Panc1 (cell line): ENCODE measurements at regions of chr12 and their contacts with region 1.

Region 1: GRCh38 chr12:2284857-2285256 is 232.1 kb downstream of the CACNA1C start:
- DNase-seq: peak; percentile 8
- ATAC-seq: peak; percentile 95
- H3K4me3 ChIP-seq: no peak overlapping the region
- H3K27ac ChIP-seq: no peak overlapping the region
- H3K4me1 ChIP-seq: no peaks in the 10 kb centered on the region
- H3K27me3 ChIP-seq: peaks cover 4% of the 10 kb centered on the region; the same call in 1 of the 2 replicates
- CTCF ChIP-seq: peak; percentile 73

Region 2: DNA sequence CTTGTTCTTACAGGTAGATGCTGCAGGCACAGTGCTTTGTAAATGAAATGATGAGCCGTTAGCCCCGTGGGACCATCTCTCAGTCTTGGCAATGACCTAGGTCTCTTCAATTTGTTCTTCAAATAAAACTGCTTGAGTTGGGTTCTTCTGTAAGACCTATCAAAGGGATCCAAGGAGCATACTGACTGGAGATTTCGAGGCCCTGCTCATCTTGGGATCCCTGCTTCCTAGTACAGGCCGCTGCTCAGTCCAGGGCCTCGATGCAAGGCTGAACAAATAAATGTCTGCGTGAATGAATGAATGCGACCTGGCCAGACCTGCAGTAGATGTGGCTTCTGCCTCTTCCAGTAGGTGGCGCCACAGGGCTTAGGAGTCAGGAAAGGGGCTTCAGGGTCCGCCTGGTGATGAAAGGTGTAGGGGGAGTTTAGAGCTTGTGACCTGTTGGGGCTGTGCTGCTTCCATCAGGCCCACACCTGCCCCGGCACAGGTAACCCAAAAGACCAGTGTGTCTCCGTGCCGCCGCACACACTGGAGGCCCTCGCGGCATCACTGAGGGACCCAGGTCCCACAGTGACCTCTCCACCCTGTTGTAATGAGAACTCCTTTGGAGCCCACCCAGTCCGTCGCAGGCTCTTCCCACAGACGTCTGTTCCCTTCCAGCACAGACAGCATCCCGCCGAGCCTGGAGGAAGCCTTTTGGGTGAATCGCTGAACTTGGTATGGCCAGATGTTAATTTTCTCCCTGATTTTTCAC is 227.6 kb before region 1 on chr12:
- CTCF ChIA-PET with region 1: no interaction called
- POLR2A ChIA-PET with region 1: no interaction called
- in situ Hi-C with region 1: no loop called
- intact Hi-C with region 1: loop called (anchors 5 kb)
- DNase-seq: peak; percentile 7
- ATAC-seq: no peak
- H3K4me3 ChIP-seq: no peak overlapping the region
- H3K27ac ChIP-seq: no peak overlapping the region
- H3K4me1 ChIP-seq: no peaks in the 10 kb centered on the region
- H3K27me3 ChIP-seq: peaks cover 15% of the 10 kb centered on the region
- CTCF ChIP-seq: peak; percentile 81

Region 3: DNA sequence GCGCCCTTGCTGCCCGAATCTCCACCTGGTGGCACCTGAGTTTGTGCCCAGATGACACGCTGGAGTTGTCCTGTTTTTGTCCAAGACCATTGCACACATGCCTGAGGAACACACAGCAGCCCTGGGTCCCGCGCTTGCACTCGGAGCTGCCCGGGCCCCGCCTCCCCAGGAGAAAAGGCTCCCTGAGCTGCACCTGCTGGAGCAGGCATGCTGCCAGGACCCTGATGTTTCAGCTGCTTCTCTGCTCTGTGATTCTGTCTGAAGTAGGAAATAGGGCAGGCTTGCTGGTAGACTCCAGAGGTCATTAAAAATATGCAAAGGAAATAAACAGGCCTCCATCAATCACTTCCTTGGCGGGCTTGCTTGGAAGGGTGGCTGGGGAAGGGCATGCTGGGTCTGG is 39.5 kb after region 1 on chr12:
- CTCF ChIA-PET with region 1: no interaction called
- POLR2A ChIA-PET with region 1: no interaction called
- in situ Hi-C with region 1: no loop called
- intact Hi-C with region 1: no loop called
- DNase-seq: no peak
- ATAC-seq: no peak
- H3K4me3 ChIP-seq: no peak overlapping the region
- H3K27ac ChIP-seq: no peak overlapping the region
- H3K4me1 ChIP-seq: no peaks in the 10 kb centered on the region
- H3K27me3 ChIP-seq: peaks cover 4% of the 10 kb centered on the region
- CTCF ChIP-seq: no peak